ENCODE measurements at regions of chr11 and their contacts with region 1.

Region 1: GRCh38 chr11:86003654-86004053 is 65.2 kb downstream of the PICALM start:
- DNase-seq: no peak
- H3K4me3 Mint-ChIP-seq: no peak overlapping the region
- H3K27ac Mint-ChIP-seq: no peak overlapping the region
- H3K4me1 Mint-ChIP-seq: peaks cover 15% of the 10 kb centered on the region
- H3K27me3 Mint-ChIP-seq: no peaks in the 10 kb centered on the region

Region 2: DNA sequence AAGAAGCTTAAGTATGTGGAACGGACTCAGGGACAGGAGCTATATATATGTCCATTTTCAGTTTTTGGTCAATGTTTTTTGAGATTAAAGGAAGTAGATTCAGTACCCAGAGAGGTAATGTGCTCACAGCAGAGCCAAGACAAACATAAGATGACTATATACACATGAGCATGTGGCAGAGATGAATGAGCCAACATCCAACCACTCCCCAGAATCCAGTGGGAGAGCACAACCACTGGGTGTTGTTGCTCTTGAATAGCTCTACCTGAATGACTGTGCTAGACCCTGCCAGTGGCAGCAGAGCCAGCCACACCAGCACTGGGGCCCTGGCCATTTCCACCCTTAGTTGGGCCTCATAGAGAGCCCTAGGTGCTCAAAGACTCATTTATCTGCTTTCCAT is 182.0 kb before region 1 on chr11:
- intact Hi-C with region 1: no loop called
- DNase-seq: no peak
- H3K4me3 Mint-ChIP-seq: no peak overlapping the region
- H3K27ac Mint-ChIP-seq: no peak overlapping the region
- H3K4me1 Mint-ChIP-seq: peaks cover 52% of the 10 kb centered on the region
- H3K27me3 Mint-ChIP-seq: no peaks in the 10 kb centered on the region

Region 3: GRCh38 chr11:85867751-85868150 is 135.9 kb before region 1 on chr11:
- intact Hi-C with region 1: no loop called
- DNase-seq: no peak
- H3K4me3 Mint-ChIP-seq: no peak overlapping the region
- H3K27ac Mint-ChIP-seq: no peak overlapping the region
- H3K4me1 Mint-ChIP-seq: no peaks in the 10 kb centered on the region
- H3K27me3 Mint-ChIP-seq: peaks cover 18% of the 10 kb centered on the region

Region 4: GRCh38 chr11:85965202-85965601 is 38.5 kb before region 1 on chr11:
- intact Hi-C with region 1: loop called (anchors 5 kb)
- DNase-seq: no peak
- H3K4me3 Mint-ChIP-seq: no peak overlapping the region
- H3K27ac Mint-ChIP-seq: no peak overlapping the region
- H3K4me1 Mint-ChIP-seq: peaks cover 29% of the 10 kb centered on the region
- H3K27me3 Mint-ChIP-seq: no peaks in the 10 kb centered on the region

Region 5: GRCh38 chr11:85988780-85989179 is 14.9 kb before region 1 on chr11:
- intact Hi-C with region 1: no loop called
- DNase-seq: no peak
- H3K4me3 Mint-ChIP-seq: no peak overlapping the region
- H3K27ac Mint-ChIP-seq: peak overlapping the region; percentile 42
- H3K4me1 Mint-ChIP-seq: peaks cover 17% of the 10 kb centered on the region
- H3K27me3 Mint-ChIP-seq: no peaks in the 10 kb centered on the region

Measured in activated T-helper 2 cell treated with anti-CD3 and anti-CD28 coated beads, Interferon-gamma antibody, Interleukin-2, Interleukin-4, amounts not matched to agents 10 μg/mL and 5 μg/mL and 100 μg/mL, durations not matched to agents 14 hours and 24 hours and 36 hours (primary cell).